Gastrocnemius medialis (tissue), 4 donors: ENCODE measurements at regions of chr20 and their contacts with region 1.

Region 1: GRCh38 chr20:49853640-49854039 is 41.0 kb downstream of the SLC9A8 start:
- DNase-seq: peak in 1 of 2 donors; percentile 47
- ATAC-seq: peak; percentile 39 to 41
- H3K4me3 ChIP-seq: no peak overlapping the region
- H3K27ac ChIP-seq: peak overlapping the region in 2 of 4 donors; percentile 63 to 76
- H3K4me1 ChIP-seq: peaks cover 28 to 41% of the 10 kb centered on the region in 2 donors
- H3K27me3 ChIP-seq: no peaks in the 10 kb centered on the region
- CTCF ChIP-seq: no peak
- POLR2A ChIP-seq: no peak

Region 2: GRCh38 chr20:49344975-49345374 is 508.7 kb before region 1 on chr20:
- in situ Hi-C with region 1: loop called in 1 of 4 experiments (anchors 25 kb)
- intact Hi-C with region 1: no loop called
- DNase-seq: peak; percentile 53 to 71
- ATAC-seq: peak; percentile 69
- H3K4me3 ChIP-seq: peak overlapping the region in 3 of 4 donors; percentile 5 to 30 (median 10)
- H3K27ac ChIP-seq: peak overlapping the region; percentile 62 to 87 (median 78)
- H3K4me1 ChIP-seq: peaks cover 32 to 43% of the 10 kb centered on the region in 2 donors
- H3K27me3 ChIP-seq: no peaks in the 10 kb centered on the region
- CTCF ChIP-seq: no peak
- POLR2A ChIP-seq: no peak